PC-9 (cell line): ENCODE measurements at regions of chr16 and their contacts with region 1.

Region 1: GRCh38 chr16:31354394-31355291 is at the start of gene ITGAX:
- DNase-seq: peak in 1 of 2 experiments; percentile 52
- H3K4me3 ChIP-seq: no peak within 1 kb of the TSS
- H3K27ac ChIP-seq: no peak within 1 kb of the TSS
- H3K4me1 ChIP-seq: peaks cover 8% of the 10 kb centered on the region; the same call in 1 of the 2 replicates
- H3K27me3 ChIP-seq: peaks cover 9% of the 10 kb centered on the region
- CTCF ChIP-seq: no peak
- total RNA-seq, gene ITGAX: 1.1 and 1.2 TPM in 2 replicates

Region 2: GRCh38 chr16:30867747-30868146 is 486.9 kb before region 1 on chr16:
- CTCF ChIA-PET with region 1: no interaction called
- POLR2A ChIA-PET with region 1: no interaction called
- intact Hi-C with region 1: no loop called
- DNase-seq: no peak
- H3K4me3 ChIP-seq: no peak overlapping the region
- H3K27ac ChIP-seq: no peak overlapping the region
- H3K4me1 ChIP-seq: no peaks in the 10 kb centered on the region
- H3K27me3 ChIP-seq: no peaks in the 10 kb centered on the region
- CTCF ChIP-seq: peak; percentile 47

Region 3: GRCh38 chr16:31322500-31322899 is 32.1 kb before region 1 on chr16:
- CTCF ChIA-PET with region 1: no interaction called
- POLR2A ChIA-PET with region 1: no interaction called
- intact Hi-C with region 1: no loop called
- DNase-seq: no peak
- H3K4me3 ChIP-seq: no peak overlapping the region
- H3K27ac ChIP-seq: no peak overlapping the region
- H3K4me1 ChIP-seq: no peaks in the 10 kb centered on the region
- H3K27me3 ChIP-seq: no peaks in the 10 kb centered on the region
- CTCF ChIP-seq: no peak

Region 4: DNA sequence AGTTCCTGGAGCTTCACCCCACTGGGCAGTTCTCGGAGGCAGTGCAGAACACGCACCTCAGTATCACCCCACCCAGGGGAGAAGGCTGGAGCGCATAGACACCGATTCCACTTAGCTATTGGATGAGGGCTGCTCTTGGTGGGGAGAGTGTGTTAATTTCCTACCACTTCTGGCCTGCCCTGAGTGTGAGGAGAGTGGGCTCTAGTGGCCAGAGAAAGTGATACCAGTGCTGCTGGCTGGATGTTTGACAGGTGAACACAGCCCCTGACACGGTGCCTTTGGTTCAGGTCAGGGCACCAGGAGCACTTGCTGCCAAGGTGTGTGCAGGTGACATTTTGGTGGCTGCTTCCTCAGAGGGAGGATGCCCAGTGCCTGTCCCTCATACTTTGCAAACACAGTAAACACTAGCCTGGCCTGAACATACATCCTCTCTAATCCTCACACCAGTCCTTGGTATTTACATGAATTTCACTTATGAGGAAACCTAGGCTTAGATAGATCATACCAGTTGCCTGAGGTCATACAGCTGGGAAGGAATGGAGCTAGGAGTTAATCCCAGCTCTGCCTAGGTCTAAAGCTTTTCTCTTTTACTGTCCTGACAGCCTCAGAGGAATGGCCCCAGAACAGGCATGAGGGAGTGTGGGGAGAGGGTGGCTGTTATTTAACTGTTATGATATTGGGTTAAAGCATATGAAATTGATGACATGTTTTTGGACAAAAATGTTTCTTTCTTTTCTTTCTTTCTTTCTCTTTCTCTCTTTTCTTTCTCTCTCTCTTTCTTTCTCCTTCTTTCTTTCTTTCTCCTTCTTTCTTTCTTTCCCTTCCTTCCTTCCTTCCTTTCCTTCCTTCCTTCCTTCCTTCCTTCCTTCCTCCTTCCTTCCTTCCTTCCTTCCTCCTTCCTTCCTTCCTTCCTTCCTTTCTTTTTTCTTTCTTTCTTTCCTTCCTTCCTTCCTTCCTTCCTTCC is 20.7 kb before region 1 on chr16:
- CTCF ChIA-PET with region 1: no interaction called
- POLR2A ChIA-PET with region 1: no interaction called
- intact Hi-C with region 1: no loop called
- DNase-seq: peak; percentile 57 to 60
- H3K4me3 ChIP-seq: no peak overlapping the region
- H3K27ac ChIP-seq: no peak overlapping the region
- H3K4me1 ChIP-seq: no peaks in the 10 kb centered on the region
- H3K27me3 ChIP-seq: peaks cover 47% of the 10 kb centered on the region
- CTCF ChIP-seq: peak; percentile 70

Region 5: GRCh38 chr16:31371619-31372484 is 17.2 kb after region 1 on chr16:
- CTCF ChIA-PET with region 1: interaction called, 27 read pairs
- POLR2A ChIA-PET with region 1: no interaction called
- intact Hi-C with region 1: no loop called
- DNase-seq: no peak
- H3K4me3 ChIP-seq: no peak overlapping the region
- H3K27ac ChIP-seq: no peak overlapping the region
- H3K4me1 ChIP-seq: no peaks in the 10 kb centered on the region
- H3K27me3 ChIP-seq: peaks cover 45% of the 10 kb centered on the region
- CTCF ChIP-seq: no peak